ENCODE measurements at regions of chr6 and their contacts with region 1.

Region 1: DNA sequence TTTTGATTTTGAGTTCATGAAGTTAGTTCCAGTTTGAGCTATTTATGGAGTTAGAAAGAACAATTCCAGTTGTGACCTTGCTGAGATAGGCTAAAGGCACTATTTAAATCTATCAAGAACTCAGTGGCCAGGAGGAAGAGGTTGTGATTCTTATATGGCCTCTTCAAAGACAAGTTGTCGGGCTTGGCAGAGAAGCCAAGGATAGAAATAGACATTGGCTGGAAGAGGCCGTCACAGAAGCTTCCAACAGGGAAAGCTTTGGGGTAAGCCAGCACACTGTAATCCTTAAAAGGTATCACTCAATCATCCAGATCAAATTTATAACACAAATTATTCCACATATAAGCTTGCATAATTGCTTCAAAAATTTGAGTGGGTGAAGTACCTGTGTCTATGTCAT is 286.1 kb downstream of the SYNE1 start:
- DNase-seq: no peak
- ATAC-seq: no peak
- H3K4me3 ChIP-seq: no peak overlapping the region
- H3K27ac ChIP-seq: no peak overlapping the region
- H3K4me1 ChIP-seq: no peaks in the 10 kb centered on the region
- H3K27me3 ChIP-seq: no peaks in the 10 kb centered on the region
- CTCF ChIP-seq: no peak
- POLR2A ChIP-seq: no peak
- RAD21 ChIP-seq: no peak

Region 2: GRCh38 chr6:151702851-151703611 is 648.1 kb before region 1 on chr6:
- CTCF ChIA-PET with region 1: no interaction called
- POLR2A ChIA-PET with region 1: interaction called, 17 read pairs
- dilution Hi-C with region 1: no loop called
- in situ Hi-C with region 1: no loop called
- intact Hi-C with region 1: no loop called
- DNase-seq: no peak
- ATAC-seq: no peak
- H3K4me3 ChIP-seq: no peak overlapping the region
- H3K27ac ChIP-seq: no peak overlapping the region
- H3K4me1 ChIP-seq: no peaks in the 10 kb centered on the region
- H3K27me3 ChIP-seq: no peaks in the 10 kb centered on the region
- CTCF ChIP-seq: no peak
- POLR2A ChIP-seq: no peak
- RAD21 ChIP-seq: no peak

Region 3: GRCh38 chr6:152218880-152219279 is 132.2 kb before region 1 on chr6:
- CTCF ChIA-PET with region 1: no interaction called
- POLR2A ChIA-PET with region 1: no interaction called
- dilution Hi-C with region 1: no loop called
- in situ Hi-C with region 1: no loop called
- intact Hi-C with region 1: loop called (anchors 10 kb)
- DNase-seq: no peak
- ATAC-seq: no peak
- H3K4me3 ChIP-seq: no peak overlapping the region
- H3K27ac ChIP-seq: no peak overlapping the region
- H3K4me1 ChIP-seq: no peaks in the 10 kb centered on the region
- H3K27me3 ChIP-seq: no peaks in the 10 kb centered on the region
- CTCF ChIP-seq: no peak
- POLR2A ChIP-seq: no peak
- RAD21 ChIP-seq: no peak

Region 4: GRCh38 chr6:153059761-153060160 is 708.7 kb after region 1 on chr6:
- CTCF ChIA-PET with region 1: no interaction called
- POLR2A ChIA-PET with region 1: no interaction called
- dilution Hi-C with region 1: no loop called
- in situ Hi-C with region 1: no loop called
- intact Hi-C with region 1: no loop called
- DNase-seq: no peak
- ATAC-seq: no peak
- H3K4me3 ChIP-seq: no peak overlapping the region
- H3K27ac ChIP-seq: no peak overlapping the region
- H3K4me1 ChIP-seq: peaks cover 8% of the 10 kb centered on the region
- H3K27me3 ChIP-seq: no peaks in the 10 kb centered on the region
- CTCF ChIP-seq: 0 out of 2 replicates have a peak, but pooled peaks have one; percentile 9
- POLR2A ChIP-seq: no peak
- RAD21 ChIP-seq: no peak; the same call in 1 of the 2 replicates

Region 5: GRCh38 chr6:153476243-153476642 is 1125.1 kb after region 1 on chr6:
- CTCF ChIA-PET with region 1: no interaction called
- POLR2A ChIA-PET with region 1: no interaction called
- dilution Hi-C with region 1: no loop called
- in situ Hi-C with region 1: no loop called
- intact Hi-C with region 1: no loop called
- DNase-seq: no peak
- ATAC-seq: no peak
- H3K4me3 ChIP-seq: no peak overlapping the region
- H3K27ac ChIP-seq: no peak overlapping the region
- H3K4me1 ChIP-seq: no peaks in the 10 kb centered on the region
- H3K27me3 ChIP-seq: no peaks in the 10 kb centered on the region
- CTCF ChIP-seq: no peak
- POLR2A ChIP-seq: no peak
- RAD21 ChIP-seq: no peak